ENCODE measurements at regions of chr15 and their contacts with region 1.

Region 1: GRCh38 chr15:98311566-98312188 is 336.7 kb upstream of the IGF1R start:
- DNase-seq: peak; percentile 52
- H3K4me3 Mint-ChIP-seq: no peak overlapping the region
- H3K27ac Mint-ChIP-seq: no peak overlapping the region
- H3K4me1 Mint-ChIP-seq: no peaks in the 10 kb centered on the region
- H3K27me3 Mint-ChIP-seq: no peaks in the 10 kb centered on the region

Region 2: GRCh38 chr15:98428253-98428989 is 116.7 kb after region 1 on chr15:
- intact Hi-C with region 1: loop called (anchors 2 kb)
- DNase-seq: peak; percentile 60
- H3K4me3 Mint-ChIP-seq: no peak overlapping the region
- H3K27ac Mint-ChIP-seq: no peak overlapping the region
- H3K4me1 Mint-ChIP-seq: peaks cover 2% of the 10 kb centered on the region
- H3K27me3 Mint-ChIP-seq: peaks cover 33% of the 10 kb centered on the region

Measured in activated T-helper 2 cell treated with anti-CD3 and anti-CD28 coated beads, Interferon-gamma antibody, Interleukin-2, Interleukin-4, amounts not matched to agents 10 μg/mL and 5 μg/mL and 100 μg/mL, durations not matched to agents 14 hours and 24 hours and 36 hours (primary cell).